ENCODE measurements at regions of chr16 and their contacts with region 1.

Region 1: DNA sequence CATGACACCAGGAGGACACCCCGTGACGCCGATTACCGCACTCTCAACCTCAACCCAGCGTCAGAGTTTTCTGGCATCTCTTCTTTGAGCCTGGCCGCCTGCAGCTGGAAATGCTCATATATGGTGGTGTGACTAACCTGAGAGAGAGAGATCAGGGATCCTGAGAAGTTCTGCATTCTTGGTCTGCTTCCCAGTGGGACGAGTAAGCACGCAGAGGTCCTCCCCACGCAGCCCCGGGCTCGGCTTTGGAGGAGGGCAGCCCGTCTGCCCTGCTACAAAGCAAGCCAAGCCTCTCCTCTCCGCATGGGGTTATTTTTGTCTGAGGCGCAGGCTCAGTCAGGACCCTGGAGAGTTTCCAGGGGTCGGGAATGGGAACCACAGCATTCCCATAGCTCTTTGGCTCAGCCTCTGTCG is 16.5 kb downstream of the CRISPLD2 start:
- DNase-seq: peak; percentile 91 to 97 (median 93)
- H3K4me3 ChIP-seq: no peak overlapping the region
- H3K27ac ChIP-seq: peak overlapping the region; percentile 24 to 57
- H3K4me1 ChIP-seq: peaks cover 16% of the 10 kb centered on the region
- H3K27me3 ChIP-seq: no peaks in the 10 kb centered on the region
- CTCF ChIP-seq: no peak
- EP300 ChIP-seq: peak; percentile 91
- POLR2A ChIP-seq: no peak

Region 2: GRCh38 chr16:84754353-84754856 is 81.8 kb before region 1 on chr16:
- intact Hi-C with region 1: no loop called
- DNase-seq: peak in 2 of 5 donors; percentile 50 to 78
- H3K4me3 ChIP-seq: no peak overlapping the region
- H3K27ac ChIP-seq: no peak overlapping the region
- H3K4me1 ChIP-seq: peaks cover 23% of the 10 kb centered on the region
- H3K27me3 ChIP-seq: no peaks in the 10 kb centered on the region
- CTCF ChIP-seq: peak; percentile 48 to 94 (median 86)
- EP300 ChIP-seq: no peak
- POLR2A ChIP-seq: no peak

Region 3: DNA sequence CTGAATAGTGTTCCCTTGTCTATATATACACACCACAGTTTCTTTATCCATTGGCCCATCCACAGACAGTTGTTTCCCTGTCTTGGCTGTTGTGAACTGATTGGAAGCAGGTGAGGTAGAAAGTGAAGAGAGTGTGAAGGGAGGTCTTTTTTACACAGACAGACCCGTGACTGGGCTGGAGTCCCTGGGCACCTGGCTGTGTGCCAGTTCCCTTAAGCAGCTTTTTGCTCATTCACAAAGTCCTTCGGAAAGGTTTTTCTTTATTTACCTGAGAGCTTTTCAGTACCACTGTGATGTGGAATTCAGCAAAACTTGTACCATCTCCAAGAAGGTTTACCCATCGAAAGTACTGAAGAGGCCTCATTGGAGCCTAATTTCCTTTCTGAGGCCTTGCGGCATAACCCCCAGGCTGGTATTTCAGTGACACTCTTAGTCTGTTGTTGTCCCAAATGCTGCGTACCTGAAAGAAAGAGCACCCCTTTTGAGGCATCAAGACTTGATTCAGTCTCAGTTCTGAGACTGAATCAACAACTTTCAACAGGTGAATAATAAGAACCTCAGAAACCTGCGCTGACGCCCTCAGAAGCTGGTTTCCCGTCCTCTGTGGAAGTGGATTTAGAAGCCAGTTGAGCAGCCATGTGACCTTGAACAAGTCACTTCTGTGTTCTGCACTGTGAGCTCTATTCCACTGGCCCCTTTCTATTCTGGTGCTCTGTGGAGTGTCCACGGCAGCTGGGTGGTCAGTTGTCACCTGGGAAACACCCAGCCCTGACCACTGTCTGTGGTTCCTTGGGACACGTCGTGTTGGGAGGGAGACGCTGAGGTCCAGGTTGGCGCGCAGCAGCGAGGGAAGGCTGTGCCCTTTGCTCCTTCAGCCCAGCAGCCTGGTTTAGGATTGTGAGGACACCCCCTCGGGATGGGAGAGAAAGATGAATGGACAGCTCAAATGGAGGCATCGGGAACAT is 70.3 kb before region 1 on chr16:
- intact Hi-C with region 1: loop called in 1 of 4 experiments (anchors 5 kb)
- DNase-seq: no peak
- H3K4me3 ChIP-seq: no peak overlapping the region
- H3K27ac ChIP-seq: peak overlapping the region in 1 of 2 donors; percentile 69
- H3K4me1 ChIP-seq: peaks cover 7% of the 10 kb centered on the region
- H3K27me3 ChIP-seq: no peaks in the 10 kb centered on the region
- CTCF ChIP-seq: no peak
- EP300 ChIP-seq: no peak
- POLR2A ChIP-seq: no peak

Region 4: GRCh38 chr16:84925092-84925772 is 89.0 kb after region 1 on chr16:
- intact Hi-C with region 1: loop called in 1 of 4 experiments (anchors 5 kb)
- DNase-seq: peak; percentile 53 to 79 (median 66)
- H3K4me3 ChIP-seq: no peak overlapping the region
- H3K27ac ChIP-seq: no peak overlapping the region
- H3K4me1 ChIP-seq: peaks cover 42% of the 10 kb centered on the region
- H3K27me3 ChIP-seq: no peaks in the 10 kb centered on the region
- CTCF ChIP-seq: peak in 1 of 3 donors; percentile 43
- EP300 ChIP-seq: no peak
- POLR2A ChIP-seq: no peak

Region 5: GRCh38 chr16:85935974-85936760 is 1099.9 kb after region 1 on chr16:
- intact Hi-C with region 1: no loop called
- DNase-seq: no peak
- H3K4me3 ChIP-seq: no peak overlapping the region
- H3K27ac ChIP-seq: no peak overlapping the region
- H3K4me1 ChIP-seq: peaks cover 3% of the 10 kb centered on the region
- H3K27me3 ChIP-seq: no peaks in the 10 kb centered on the region
- CTCF ChIP-seq: no peak
- EP300 ChIP-seq: no peak
- POLR2A ChIP-seq: no peak